ENCODE measurements at regions of chr19 and their contacts with region 1.

Region 1: GRCh38 chr19:14550201-14550784 is 20.9 kb downstream of the TECR start:
- DNase-seq: no peak
- ATAC-seq: no peak
- H3K4me3 ChIP-seq: no peak overlapping the region
- H3K27ac ChIP-seq: no peak overlapping the region
- H3K4me1 ChIP-seq: peaks cover 51% of the 10 kb centered on the region
- H3K27me3 ChIP-seq: no peaks in the 10 kb centered on the region
- CTCF ChIP-seq: no peak
- EP300 ChIP-seq: no peak
- POLR2A ChIP-seq: no peak
- RAD21 ChIP-seq: no peak

Region 2: DNA sequence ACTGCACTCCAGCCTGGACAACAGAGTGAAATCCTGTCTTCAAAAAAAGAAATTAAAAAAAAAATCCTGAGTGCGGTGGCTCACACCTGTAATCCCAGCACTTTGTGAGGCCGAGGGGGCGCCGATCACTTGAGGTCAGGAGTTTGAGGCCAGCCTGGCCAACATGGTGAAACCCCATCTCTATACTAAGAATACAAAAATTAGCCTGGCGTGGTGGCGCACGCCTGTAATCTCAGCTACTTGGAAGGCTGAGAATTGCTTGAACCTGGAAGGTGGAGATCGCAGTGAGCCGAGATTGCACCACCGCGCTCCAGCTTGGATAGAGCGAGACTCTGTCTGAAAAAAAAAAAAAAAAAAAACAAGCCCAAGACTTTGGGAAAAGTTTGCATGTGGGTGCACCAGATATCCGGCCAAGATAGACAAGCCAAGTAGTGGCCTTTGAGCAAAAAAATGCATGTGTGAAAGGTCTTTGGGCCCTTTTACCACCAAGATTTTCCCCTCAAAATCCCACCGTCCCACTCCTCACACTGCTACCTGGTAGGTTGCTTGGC is 37.8 kb before region 1 on chr19:
- CTCF ChIA-PET with region 1: no interaction called
- POLR2A ChIA-PET with region 1: interaction called, 17 read pairs
- in situ Hi-C with region 1: no loop called
- intact Hi-C with region 1: loop called (anchors 1 kb)
- DNase-seq: no peak
- ATAC-seq: no peak
- H3K4me3 ChIP-seq: no peak overlapping the region
- H3K27ac ChIP-seq: peak overlapping the region; percentile 91
- H3K4me1 ChIP-seq: peaks cover 88% of the 10 kb centered on the region
- H3K27me3 ChIP-seq: no peaks in the 10 kb centered on the region; a peak in 1 of 5 replicates
- CTCF ChIP-seq: no peak
- EP300 ChIP-seq: no peak
- POLR2A ChIP-seq: no peak
- RAD21 ChIP-seq: no peak

Region 3: DNA sequence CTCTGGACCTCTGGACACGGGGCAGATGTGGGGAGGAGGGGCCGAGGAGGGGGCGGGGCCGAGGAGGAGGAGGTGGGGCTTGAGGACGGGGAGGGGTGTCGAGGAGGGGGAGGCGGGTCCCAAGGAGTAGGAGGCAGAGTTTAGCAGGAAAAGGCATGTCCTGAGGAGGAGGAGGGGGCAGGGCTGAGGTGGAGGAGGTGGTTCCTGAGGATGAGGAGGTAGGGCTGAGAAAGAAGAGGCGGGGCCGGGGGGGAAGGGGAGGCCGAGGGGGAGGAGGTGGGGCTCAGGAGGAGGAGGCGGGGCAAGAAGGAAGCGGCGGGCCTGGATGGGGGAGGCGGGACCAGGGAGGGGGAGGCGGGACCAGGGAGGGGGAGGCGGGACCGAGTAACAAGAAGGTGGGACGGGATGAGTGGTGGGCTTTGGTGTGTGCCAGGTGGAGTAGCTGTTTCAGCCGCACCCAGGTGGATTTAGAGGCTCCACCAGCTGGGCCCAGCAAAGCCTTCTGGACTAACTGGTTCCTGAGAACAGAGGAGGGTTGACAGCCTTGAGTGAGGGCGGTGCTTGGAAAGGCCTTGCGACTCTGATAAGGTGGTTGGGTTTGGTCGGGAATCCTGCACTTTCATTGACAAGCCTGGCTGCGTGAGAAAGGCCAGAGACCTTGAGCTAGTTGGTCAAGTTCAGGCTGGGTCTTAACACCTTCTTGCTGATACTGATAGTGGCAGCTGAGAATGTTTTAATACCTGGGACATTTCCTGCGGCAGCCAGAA is 13.2 kb before region 1 on chr19:
- CTCF ChIA-PET with region 1: no interaction called
- POLR2A ChIA-PET with region 1: interaction called, 3 read pairs
- in situ Hi-C with region 1: no loop called
- intact Hi-C with region 1: loop called (anchors 2 kb)
- DNase-seq: no peak
- ATAC-seq: no peak; the same call in 2 of the 3 replicates
- H3K4me3 ChIP-seq: no peak overlapping the region
- H3K27ac ChIP-seq: no peak overlapping the region
- H3K4me1 ChIP-seq: peaks cover 25% of the 10 kb centered on the region
- H3K27me3 ChIP-seq: no peaks in the 10 kb centered on the region; a peak in 1 of 5 replicates
- CTCF ChIP-seq: no peak
- EP300 ChIP-seq: no peak
- POLR2A ChIP-seq: no peak
- RAD21 ChIP-seq: no peak

Region 4: DNA sequence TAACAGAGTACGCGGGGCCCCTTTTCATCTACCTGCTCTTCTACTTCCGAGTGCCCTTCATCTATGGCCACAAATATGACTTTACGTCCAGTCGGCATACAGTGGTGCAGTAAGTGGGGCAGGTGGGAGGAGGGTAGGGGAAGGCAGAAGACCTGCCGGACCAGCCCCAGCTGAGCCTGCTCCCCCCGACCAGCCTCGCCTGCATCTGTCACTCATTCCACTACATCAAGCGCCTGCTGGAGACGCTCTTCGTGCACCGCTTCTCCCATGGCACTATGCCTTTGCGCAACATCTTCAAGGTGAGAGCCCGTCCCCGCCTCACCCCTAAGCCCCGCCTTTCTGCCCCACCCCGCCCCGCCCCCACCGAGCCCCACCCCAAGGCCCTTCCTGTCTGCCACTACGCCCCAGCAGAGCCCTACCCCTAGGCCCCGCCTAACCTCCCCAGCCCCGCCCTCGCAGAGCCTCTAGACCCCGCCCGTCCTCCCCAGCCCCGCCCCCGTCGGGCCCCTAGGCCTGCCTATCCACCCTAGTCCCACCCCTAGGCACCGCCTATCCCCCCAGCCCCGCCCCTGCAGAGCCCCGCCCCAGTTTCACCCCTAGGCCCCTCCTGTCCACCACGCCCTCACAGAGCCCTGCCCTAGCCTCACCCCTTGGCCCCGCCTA is 13.8 kb after region 1 on chr19:
- CTCF ChIA-PET with region 1: no interaction called
- POLR2A ChIA-PET with region 1: no interaction called
- in situ Hi-C with region 1: no loop called
- intact Hi-C with region 1: no loop called
- DNase-seq: no peak
- ATAC-seq: peak; percentile 29
- H3K4me3 ChIP-seq: no peak overlapping the region
- H3K27ac ChIP-seq: no peak overlapping the region
- H3K4me1 ChIP-seq: peaks cover 9% of the 10 kb centered on the region; the same call in 1 of the 2 replicates
- H3K27me3 ChIP-seq: no peaks in the 10 kb centered on the region
- CTCF ChIP-seq: no peak
- EP300 ChIP-seq: no peak
- POLR2A ChIP-seq: no peak
- RAD21 ChIP-seq: no peak